Activated B cell treated with CpG ODN at 0.5 μM for 24 hours (primary cell): ENCODE measurements at regions of chr6 and their contacts with region 1.

Region 1: GRCh38 chr6:27312146-27312949 is at the start of gene POM121L2:
- DNase-seq: peak; percentile 53
- ATAC-seq: peak; percentile 71
- H3K4me3 Mint-ChIP-seq: peak within 1 kb of the TSS; percentile 82
- H3K27ac Mint-ChIP-seq: no peak within 1 kb of the TSS
- H3K4me1 Mint-ChIP-seq: peaks cover 12% of the 10 kb centered on the region
- H3K27me3 Mint-ChIP-seq: peaks cover 66% of the 10 kb centered on the region
- CTCF ChIP-seq: no peak
- total RNA-seq, gene POM121L2: not detected in 2 replicates

Region 2: GRCh38 chr6:27111743-27112142 is 200.6 kb before region 1 on chr6:
- CTCF ChIA-PET with region 1: no interaction called
- POLR2A ChIA-PET with region 1: no interaction called
- intact Hi-C with region 1: no loop called
- DNase-seq: no peak
- ATAC-seq: no peak
- H3K4me3 Mint-ChIP-seq: no peak overlapping the region
- H3K27ac Mint-ChIP-seq: no peak overlapping the region
- H3K4me1 Mint-ChIP-seq: no peaks in the 10 kb centered on the region
- H3K27me3 Mint-ChIP-seq: peaks cover 10% of the 10 kb centered on the region
- CTCF ChIP-seq: no peak

Region 3: DNA sequence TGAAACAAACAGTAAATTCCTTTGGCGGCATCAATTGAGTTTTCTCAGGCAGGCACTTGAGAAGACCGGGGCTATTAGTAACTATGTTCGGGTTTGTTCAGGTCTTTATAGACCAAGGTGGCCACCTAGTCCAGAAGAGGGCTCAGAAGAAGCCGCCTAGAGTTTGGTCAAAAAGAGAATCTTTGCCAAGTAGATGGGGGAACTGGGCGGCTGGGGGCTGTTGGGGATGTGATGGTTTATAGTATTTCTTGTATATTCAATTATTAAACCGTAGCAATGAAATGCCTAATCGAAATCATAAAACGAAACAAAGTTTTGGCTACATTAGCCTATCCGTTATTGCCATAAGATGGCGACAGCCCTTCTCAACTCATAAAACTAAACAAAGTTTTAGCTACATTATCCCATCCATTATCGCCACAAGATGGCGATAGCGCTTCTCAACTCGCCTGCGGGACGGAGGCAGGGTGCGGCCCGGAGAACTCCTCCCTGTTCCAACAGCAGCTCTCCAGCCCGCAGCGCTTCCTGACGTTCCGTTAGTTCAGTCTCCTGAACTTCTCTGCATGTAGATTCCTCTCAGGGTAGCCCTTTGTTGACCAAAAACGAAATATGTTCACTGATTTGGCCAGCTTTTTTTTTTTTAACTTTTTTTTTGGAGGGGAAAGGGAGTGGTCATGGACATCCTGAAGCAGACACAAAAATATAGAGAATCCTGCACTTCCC is 185.4 kb before region 1 on chr6:
- CTCF ChIA-PET with region 1: interaction called, 6 read pairs
- POLR2A ChIA-PET with region 1: no interaction called
- intact Hi-C with region 1: loop called (anchors 2 kb)
- DNase-seq: peak; percentile 55
- ATAC-seq: peak; percentile 79
- H3K4me3 Mint-ChIP-seq: peak overlapping the region; percentile 81
- H3K27ac Mint-ChIP-seq: peak overlapping the region; percentile 82
- H3K4me1 Mint-ChIP-seq: peaks cover 14% of the 10 kb centered on the region
- H3K27me3 Mint-ChIP-seq: no peaks in the 10 kb centered on the region
- CTCF ChIP-seq: peak; percentile 54

Region 4: GRCh38 chr6:27157459-27158315 is 154.7 kb before region 1 on chr6:
- CTCF ChIA-PET with region 1: interaction called, 4 read pairs
- POLR2A ChIA-PET with region 1: no interaction called
- intact Hi-C with region 1: loop called (anchors 2 kb)
- DNase-seq: peak; percentile 60
- ATAC-seq: peak; percentile 80
- H3K4me3 Mint-ChIP-seq: peak overlapping the region; percentile 89
- H3K27ac Mint-ChIP-seq: peak overlapping the region; percentile 81
- H3K4me1 Mint-ChIP-seq: peaks cover 33% of the 10 kb centered on the region
- H3K27me3 Mint-ChIP-seq: no peaks in the 10 kb centered on the region
- CTCF ChIP-seq: no peak

Region 5: DNA sequence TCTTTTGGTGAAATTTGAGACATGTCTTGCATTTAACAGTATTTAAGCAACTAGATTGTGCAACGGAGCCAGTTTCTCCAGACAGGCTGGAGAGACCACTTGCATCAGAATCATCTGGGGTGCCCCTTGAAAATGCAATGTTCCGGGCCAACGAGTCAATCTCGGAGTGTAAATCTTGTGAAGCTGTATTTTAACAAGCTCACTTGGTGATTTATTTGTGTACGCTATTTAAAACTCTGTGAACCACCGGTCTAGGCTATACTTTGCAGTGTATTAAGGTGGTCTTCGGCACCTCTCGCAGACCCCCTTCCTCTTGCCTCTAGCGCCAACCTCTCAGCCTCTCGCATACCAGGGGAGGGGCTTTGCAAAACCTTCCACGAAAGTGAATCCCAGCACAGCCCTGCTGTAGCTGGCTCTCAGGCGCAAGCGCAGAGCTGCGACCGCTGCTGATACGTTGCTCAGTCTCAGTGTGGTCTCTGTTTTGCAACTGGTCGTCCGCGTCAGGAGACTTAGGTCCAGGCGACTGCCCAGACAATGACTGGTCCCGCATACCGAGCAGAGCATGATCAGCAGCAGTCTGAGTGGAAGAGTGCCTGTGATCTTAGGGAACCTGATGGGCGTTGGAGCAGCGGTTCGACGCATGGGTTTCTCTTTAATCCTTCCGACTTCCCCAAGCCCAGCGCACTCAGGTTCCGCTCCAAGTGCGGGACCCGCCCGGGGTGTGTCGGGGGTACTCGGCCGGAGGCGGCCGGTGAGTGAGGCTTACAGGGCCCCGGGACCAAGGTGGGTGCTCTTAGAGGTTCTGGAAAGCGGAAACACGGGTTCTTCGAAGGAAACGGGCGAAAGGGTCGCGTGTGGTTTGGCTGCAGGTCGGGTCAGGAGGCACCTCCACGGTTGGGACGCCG is 76.2 kb after region 1 on chr6 and contains the start of gene ZNF391:
- CTCF ChIA-PET with region 1: interaction called, 4 read pairs
- POLR2A ChIA-PET with region 1: no interaction called
- intact Hi-C with region 1: loop called (anchors 5 kb)
- DNase-seq: peak; percentile 73
- ATAC-seq: peak; percentile 88
- H3K4me3 Mint-ChIP-seq: peak within 1 kb of the TSS; percentile 97
- H3K27ac Mint-ChIP-seq: peak within 1 kb of the TSS; percentile 95
- H3K4me1 Mint-ChIP-seq: peaks cover 13% of the 10 kb centered on the region
- H3K27me3 Mint-ChIP-seq: no peaks in the 10 kb centered on the region
- CTCF ChIP-seq: no peak
- total RNA-seq, gene ZNF391: 4.8 and 5.9 TPM in 2 replicates

Region 6: DNA sequence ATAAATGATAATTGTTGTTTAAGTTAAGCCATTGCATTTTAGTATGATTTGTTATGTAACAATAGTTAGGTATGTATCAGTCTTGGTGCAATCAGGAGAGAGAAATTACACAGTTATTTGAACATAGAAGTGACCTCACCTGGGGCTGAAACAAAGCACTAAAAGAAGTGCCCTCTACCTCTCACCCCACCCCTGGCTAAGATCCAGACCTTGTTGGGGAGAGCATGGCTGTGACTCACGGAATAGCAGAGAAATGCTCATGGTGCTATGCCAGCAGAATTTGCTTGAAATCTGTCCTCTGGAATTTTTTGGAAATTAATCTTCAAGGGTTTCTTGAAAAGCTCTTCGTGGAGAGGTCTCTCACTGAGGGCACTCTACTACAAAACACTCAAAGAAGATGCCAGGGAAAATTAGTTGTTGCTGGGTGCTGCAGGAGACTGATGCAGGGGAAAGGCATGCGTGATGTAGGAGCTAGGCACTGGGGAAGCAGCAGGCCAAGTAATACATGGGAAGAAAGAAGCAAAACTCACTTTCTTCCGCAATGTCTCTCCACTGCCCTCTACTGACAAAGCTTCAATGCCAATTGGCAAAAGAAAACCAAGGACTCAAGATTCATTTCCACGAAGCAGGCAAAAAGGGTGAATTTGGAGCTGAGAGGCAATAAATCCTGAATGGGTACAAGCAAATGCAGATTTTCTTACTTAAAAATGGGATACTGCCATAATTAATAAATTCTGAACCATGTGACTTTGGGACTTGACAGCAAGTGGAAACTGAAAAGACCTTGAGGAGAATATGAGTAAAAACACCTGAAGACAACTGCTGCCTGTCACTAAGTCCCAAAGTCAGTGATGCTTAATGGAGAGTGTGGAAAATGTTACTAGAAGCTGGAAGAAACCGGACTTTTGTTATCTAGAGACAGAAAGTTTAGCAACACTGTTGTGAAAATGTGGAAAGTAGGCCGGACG is 296.9 kb after region 1 on chr6:
- CTCF ChIA-PET with region 1: interaction called, 10 read pairs
- POLR2A ChIA-PET with region 1: no interaction called
- intact Hi-C with region 1: loop called (anchors 2 kb)
- DNase-seq: no peak
- ATAC-seq: no peak
- H3K4me3 Mint-ChIP-seq: no peak overlapping the region
- H3K27ac Mint-ChIP-seq: no peak overlapping the region
- H3K4me1 Mint-ChIP-seq: peaks cover 7% of the 10 kb centered on the region
- H3K27me3 Mint-ChIP-seq: peaks cover 47% of the 10 kb centered on the region
- CTCF ChIP-seq: no peak